Activated T-helper 1 cell treated with anti-CD3 and anti-CD28 coated beads, Interleukin-12 subunit alpha, Interleukin-12 subunit beta, Interleukin-2, Interleukin-4 antibody, amounts not matched to agents 30 ng/mL and 10 ng/mL and 1 ng/mL, durations not matched to agents 14 hours and 24 hours and 36 hours (primary cell): ENCODE measurements at regions of chr6 and their contacts with region 1.

Region 1: DNA sequence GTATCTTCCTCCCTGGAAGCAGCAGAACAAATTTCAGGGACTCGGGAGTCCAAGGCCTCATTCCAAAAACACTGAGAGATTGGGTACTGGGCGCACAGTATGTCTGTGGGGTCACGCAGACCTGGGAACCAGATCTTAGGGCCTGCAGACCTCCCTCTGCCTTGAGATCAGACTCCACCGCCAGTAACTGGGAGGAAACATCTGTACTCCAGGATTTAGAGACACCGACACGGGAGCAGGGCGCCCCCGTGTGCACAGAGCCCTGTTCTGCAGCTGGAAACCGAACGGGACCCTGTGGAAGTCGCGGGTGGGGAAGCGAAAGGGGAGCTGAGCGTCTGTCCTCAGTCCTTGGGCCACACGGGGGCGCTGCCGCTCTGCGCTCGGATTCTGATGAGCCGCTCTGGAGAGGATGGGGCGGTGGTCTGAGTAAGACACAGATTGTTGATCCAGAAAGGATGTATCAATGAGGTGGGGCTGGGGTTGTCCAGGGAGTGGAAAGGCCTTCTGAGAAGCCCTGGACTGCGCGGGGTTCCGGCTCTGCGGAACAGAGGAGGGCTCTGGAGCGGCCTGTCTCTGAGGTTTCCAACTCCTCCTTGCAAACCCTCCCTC is 35.7 kb upstream of the HLA-E start:
- DNase-seq: peak; percentile 77
- H3K4me3 Mint-ChIP-seq: peak overlapping the region; percentile 25
- H3K27ac Mint-ChIP-seq: no peak overlapping the region
- H3K4me1 Mint-ChIP-seq: peaks cover 24% of the 10 kb centered on the region
- H3K27me3 Mint-ChIP-seq: peaks cover 80% of the 10 kb centered on the region

Region 2: GRCh38 chr6:30357678-30358540 is 95.7 kb before region 1 on chr6:
- intact Hi-C with region 1: loop called (anchors 2 kb)
- DNase-seq: peak; percentile 16
- H3K4me3 Mint-ChIP-seq: peak overlapping the region; percentile 82
- H3K27ac Mint-ChIP-seq: no peak overlapping the region
- H3K4me1 Mint-ChIP-seq: peaks cover 10% of the 10 kb centered on the region
- H3K27me3 Mint-ChIP-seq: peaks cover 73% of the 10 kb centered on the region

Region 3: GRCh38 chr6:30411515-30412207 is 42.0 kb before region 1 on chr6:
- intact Hi-C with region 1: loop called (anchors 1 kb)
- DNase-seq: peak; percentile 44
- H3K4me3 Mint-ChIP-seq: peak overlapping the region; percentile 5
- H3K27ac Mint-ChIP-seq: no peak overlapping the region
- H3K4me1 Mint-ChIP-seq: peaks cover 7% of the 10 kb centered on the region
- H3K27me3 Mint-ChIP-seq: peaks cover 64% of the 10 kb centered on the region

Region 4: GRCh38 chr6:30463651-30464618 is 10.3 kb after region 1 on chr6:
- intact Hi-C with region 1: loop called (anchors 1 kb)
- DNase-seq: peak; percentile 47
- H3K4me3 Mint-ChIP-seq: no peak overlapping the region
- H3K27ac Mint-ChIP-seq: no peak overlapping the region
- H3K4me1 Mint-ChIP-seq: peaks cover 21% of the 10 kb centered on the region
- H3K27me3 Mint-ChIP-seq: peaks cover 82% of the 10 kb centered on the region

Region 5: GRCh38 chr6:30483677-30484279 is 30.2 kb after region 1 on chr6:
- intact Hi-C with region 1: loop called (anchors 2 kb)
- DNase-seq: no peak
- H3K4me3 Mint-ChIP-seq: no peak overlapping the region
- H3K27ac Mint-ChIP-seq: no peak overlapping the region
- H3K4me1 Mint-ChIP-seq: peaks cover 44% of the 10 kb centered on the region
- H3K27me3 Mint-ChIP-seq: peaks cover 40% of the 10 kb centered on the region